Caco-2 (cell line): ENCODE measurements at regions of chr3 and their contacts with region 1.

Region 1: GRCh38 chr3:119279101-119279554 is 15.1 kb upstream of the ARHGAP31 start:
- DNase-seq: no peak
- H3K4me3 ChIP-seq: no peak overlapping the region
- H3K4me3 Mint-ChIP-seq: no peak overlapping the region
- H3K27ac Mint-ChIP-seq: no peak overlapping the region
- H3K4me1 ChIP-seq: no peaks in the 10 kb centered on the region
- H3K4me1 Mint-ChIP-seq: peaks cover 12% of the 10 kb centered on the region
- H3K27me3 ChIP-seq: no peaks in the 10 kb centered on the region
- H3K27me3 Mint-ChIP-seq: no peaks in the 10 kb centered on the region
- CTCF ChIP-seq: no peak

Region 2: GRCh38 chr3:119322835-119323722 is 44.0 kb after region 1 on chr3:
- CTCF ChIA-PET with region 1: no interaction called
- POLR2A ChIA-PET with region 1: no interaction called
- intact Hi-C with region 1: loop called (anchors 1 kb)
- DNase-seq: peak; percentile 76 to 85
- H3K4me3 ChIP-seq: peak overlapping the region; percentile 58
- H3K4me3 Mint-ChIP-seq: peak overlapping the region; percentile 78
- H3K27ac Mint-ChIP-seq: peak overlapping the region; percentile 48
- H3K4me1 ChIP-seq: no peaks in the 10 kb centered on the region
- H3K4me1 Mint-ChIP-seq: no peaks in the 10 kb centered on the region
- H3K27me3 ChIP-seq: no peaks in the 10 kb centered on the region
- H3K27me3 Mint-ChIP-seq: no peaks in the 10 kb centered on the region
- CTCF ChIP-seq: peak; percentile 19 to 48

Region 3: DNA sequence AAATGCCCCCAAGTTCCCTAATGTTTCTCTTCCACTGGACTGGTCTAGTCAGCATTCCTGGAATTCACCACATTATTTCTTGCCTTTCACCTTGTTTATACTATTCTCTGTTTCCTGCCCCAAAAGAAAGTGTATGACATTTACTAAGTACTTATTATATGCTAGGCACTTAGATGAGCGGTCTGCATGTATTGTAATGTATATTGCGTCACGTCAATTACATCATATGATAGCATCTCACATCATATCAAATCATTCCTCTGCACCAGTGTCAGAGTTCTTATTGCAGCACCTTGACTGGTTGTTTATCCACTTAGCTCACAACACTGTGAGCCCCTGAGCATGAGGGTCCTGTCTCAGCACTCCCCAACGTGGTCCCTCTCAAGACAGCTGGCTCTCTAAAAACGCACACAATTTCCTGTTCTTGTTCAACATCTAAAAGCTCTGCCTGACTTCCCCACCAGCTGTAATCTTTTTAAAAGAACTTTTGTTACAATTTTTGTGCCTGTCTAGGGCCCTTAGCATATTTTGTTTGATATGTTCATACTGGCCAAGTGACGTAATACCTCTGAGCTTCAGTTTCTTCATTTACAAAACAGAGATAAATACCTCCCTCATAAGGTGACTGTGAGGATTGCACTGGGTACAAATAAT is 73.8 kb after region 1 on chr3:
- CTCF ChIA-PET with region 1: interaction called, 6 read pairs
- POLR2A ChIA-PET with region 1: no interaction called
- intact Hi-C with region 1: loop called (anchors 1 kb)
- DNase-seq: peak in 1 of 2 experiments; percentile 43
- H3K4me3 ChIP-seq: no peak overlapping the region
- H3K4me3 Mint-ChIP-seq: peak overlapping the region; percentile 28
- H3K27ac Mint-ChIP-seq: peak overlapping the region; percentile 84
- H3K4me1 ChIP-seq: peaks cover 57% of the 10 kb centered on the region
- H3K4me1 Mint-ChIP-seq: peaks cover 48% of the 10 kb centered on the region
- H3K27me3 ChIP-seq: no peaks in the 10 kb centered on the region
- H3K27me3 Mint-ChIP-seq: no peaks in the 10 kb centered on the region
- CTCF ChIP-seq: peak; percentile 12 to 38

Region 4: GRCh38 chr3:119380697-119381096 is 101.6 kb after region 1 on chr3:
- CTCF ChIA-PET with region 1: no interaction called
- POLR2A ChIA-PET with region 1: no interaction called
- intact Hi-C with region 1: loop called (anchors 10 kb)
- DNase-seq: no peak
- H3K4me3 ChIP-seq: no peak overlapping the region
- H3K4me3 Mint-ChIP-seq: no peak overlapping the region
- H3K27ac Mint-ChIP-seq: no peak overlapping the region
- H3K4me1 ChIP-seq: no peaks in the 10 kb centered on the region
- H3K4me1 Mint-ChIP-seq: no peaks in the 10 kb centered on the region
- H3K27me3 ChIP-seq: no peaks in the 10 kb centered on the region
- H3K27me3 Mint-ChIP-seq: no peaks in the 10 kb centered on the region
- CTCF ChIP-seq: no peak

Region 5: DNA sequence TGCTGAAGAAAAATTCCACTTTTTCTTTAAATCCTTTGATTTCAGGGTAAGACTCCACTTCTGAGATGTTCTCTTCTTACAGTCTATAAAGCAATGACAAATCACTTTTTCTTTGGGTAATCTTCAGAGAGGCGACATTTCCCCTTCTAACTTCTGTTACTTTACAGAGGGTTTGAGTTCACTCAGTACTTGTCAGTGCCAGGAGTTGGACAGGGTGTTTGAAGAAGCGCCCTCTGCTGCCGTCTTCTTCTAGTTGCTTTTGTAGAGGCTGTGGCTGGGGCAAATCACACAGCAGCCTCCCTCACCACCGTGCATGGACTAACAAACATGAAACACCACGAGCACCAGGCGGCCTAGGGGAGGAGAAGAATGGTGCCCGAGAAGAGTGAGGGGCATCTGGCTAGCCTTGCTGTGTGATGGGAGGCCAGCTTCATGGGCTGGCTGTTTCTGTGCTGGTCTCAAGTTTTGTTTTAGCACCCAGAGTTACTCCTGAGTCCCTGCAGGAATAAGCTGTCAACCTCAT is 280.4 kb after region 1 on chr3 and contains the start of gene CD80:
- CTCF ChIA-PET with region 1: no interaction called
- POLR2A ChIA-PET with region 1: no interaction called
- intact Hi-C with region 1: loop called (anchors 1 kb)
- DNase-seq: peak; percentile 57 to 59
- H3K4me3 ChIP-seq: no peak within 1 kb of the TSS
- H3K4me3 Mint-ChIP-seq: no peak within 1 kb of the TSS
- H3K27ac Mint-ChIP-seq: no peak within 1 kb of the TSS
- H3K4me1 ChIP-seq: no peaks in the 10 kb centered on the region
- H3K4me1 Mint-ChIP-seq: peaks cover 7% of the 10 kb centered on the region
- H3K27me3 ChIP-seq: no peaks in the 10 kb centered on the region; the same call in 1 of the 2 replicates
- H3K27me3 Mint-ChIP-seq: peaks cover 18% of the 10 kb centered on the region
- CTCF ChIP-seq: peak in 1 of 2 experiments; percentile 56
- total RNA-seq, gene CD80: not detected in 2 replicates

Region 6: DNA sequence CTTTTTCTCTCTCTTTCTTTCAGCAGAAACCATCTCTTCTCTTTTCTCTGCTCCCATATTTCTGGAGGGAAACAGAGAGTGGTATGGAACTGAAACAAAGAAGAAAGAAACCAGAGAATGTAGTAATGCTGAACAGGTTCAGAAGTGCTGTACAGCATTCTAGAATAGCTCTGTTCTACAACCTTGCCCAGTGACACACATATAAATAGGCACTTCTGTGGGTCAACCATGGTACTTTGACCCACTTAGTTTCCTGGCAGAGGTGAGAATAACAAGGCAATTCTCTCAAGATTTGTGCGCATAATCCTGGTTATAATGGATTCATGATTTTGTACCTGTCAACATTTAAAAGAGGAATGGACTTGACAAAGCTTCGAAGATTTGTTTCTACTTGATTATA is 436.0 kb after region 1 on chr3:
- CTCF ChIA-PET with region 1: no interaction called
- POLR2A ChIA-PET with region 1: no interaction called
- intact Hi-C with region 1: no loop called
- DNase-seq: no peak
- H3K4me3 ChIP-seq: no peak overlapping the region
- H3K4me3 Mint-ChIP-seq: no peak overlapping the region
- H3K27ac Mint-ChIP-seq: no peak overlapping the region
- H3K4me1 ChIP-seq: no peaks in the 10 kb centered on the region
- H3K4me1 Mint-ChIP-seq: peaks cover 6% of the 10 kb centered on the region
- H3K27me3 ChIP-seq: no peaks in the 10 kb centered on the region
- H3K27me3 Mint-ChIP-seq: no peaks in the 10 kb centered on the region
- CTCF ChIP-seq: no peak